Astrocyte of the cerebellum (primary cell): ENCODE measurements at regions of chr3 and their contacts with region 1.

Region 1: GRCh38 chr3:42101048-42101447 is 9.9 kb downstream of the TRAK1 start:
- DNase-seq: no peak
- H3K4me3 ChIP-seq: no peak overlapping the region
- CTCF ChIP-seq: no peak

Region 2: DNA sequence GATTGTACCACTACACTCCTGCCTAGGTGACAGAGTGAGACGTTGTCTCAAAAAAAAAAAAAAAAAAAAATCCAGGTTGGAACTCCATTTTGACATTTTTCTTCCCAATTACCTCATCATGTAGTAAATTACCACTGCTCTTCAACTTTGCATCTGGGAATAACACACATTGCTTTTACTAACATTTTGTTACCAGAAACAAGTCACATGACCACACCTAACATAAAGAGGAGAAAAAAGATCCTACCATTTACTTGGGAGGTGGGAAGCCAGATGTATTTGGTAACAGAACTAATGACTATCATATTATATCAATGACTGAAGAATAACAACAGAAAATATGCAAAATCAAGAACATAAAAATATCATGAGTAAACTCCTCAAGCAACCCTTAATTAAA is 188.8 kb before region 1 on chr3:
- in situ Hi-C with region 1: loop called (anchors 5 kb)
- DNase-seq: no peak
- H3K4me3 ChIP-seq: no peak overlapping the region
- CTCF ChIP-seq: no peak

Region 3: DNA sequence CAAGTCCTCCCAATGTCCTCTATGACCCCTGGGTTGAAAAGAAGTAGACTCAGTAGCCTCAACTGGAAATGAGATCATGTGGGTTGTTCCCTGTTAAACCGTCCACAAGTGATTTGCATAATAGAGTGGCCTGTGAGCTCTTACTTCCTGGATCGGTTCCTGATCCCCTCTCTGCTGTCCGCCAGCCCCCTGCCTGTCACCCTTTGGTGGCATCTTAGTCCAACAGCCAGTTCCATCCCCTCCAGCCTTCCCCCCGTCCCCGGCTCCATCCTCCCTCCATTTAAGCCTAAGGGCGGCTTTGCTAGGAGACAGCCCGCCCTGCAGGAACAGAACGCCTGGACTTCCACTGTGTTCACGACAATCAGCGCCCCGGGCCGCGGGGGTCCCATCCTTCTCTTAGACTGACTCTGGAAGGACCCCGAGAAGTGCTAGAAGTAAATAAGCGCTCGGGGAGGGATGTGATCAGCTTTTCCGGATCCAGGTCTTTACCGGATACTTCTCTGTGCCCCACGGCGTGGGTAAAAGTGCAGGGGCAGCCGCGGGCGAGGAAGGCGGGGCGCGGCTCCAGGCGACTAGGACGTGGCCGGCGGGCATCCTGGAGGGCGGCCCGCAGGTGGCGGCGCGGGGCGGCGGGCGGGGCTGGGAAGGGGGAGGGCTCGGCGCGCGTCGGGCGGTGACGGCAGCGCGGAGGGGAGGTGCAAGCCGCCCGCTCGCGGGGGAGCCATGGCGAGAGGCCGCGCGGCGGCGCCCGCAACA is 87.9 kb before region 1 on chr3:
- in situ Hi-C with region 1: loop called (anchors 5 kb)
- DNase-seq: no peak
- H3K4me3 ChIP-seq: peak overlapping the region; percentile 85
- CTCF ChIP-seq: no peak

Region 4: GRCh38 chr3:42276141-42277132 is 175.4 kb after region 1 on chr3:
- in situ Hi-C with region 1: no loop called
- DNase-seq: no peak
- H3K4me3 ChIP-seq: no peak overlapping the region
- CTCF ChIP-seq: no peak